ENCODE measurements at regions of chr7 and their contacts with region 1.

Region 1: DNA sequence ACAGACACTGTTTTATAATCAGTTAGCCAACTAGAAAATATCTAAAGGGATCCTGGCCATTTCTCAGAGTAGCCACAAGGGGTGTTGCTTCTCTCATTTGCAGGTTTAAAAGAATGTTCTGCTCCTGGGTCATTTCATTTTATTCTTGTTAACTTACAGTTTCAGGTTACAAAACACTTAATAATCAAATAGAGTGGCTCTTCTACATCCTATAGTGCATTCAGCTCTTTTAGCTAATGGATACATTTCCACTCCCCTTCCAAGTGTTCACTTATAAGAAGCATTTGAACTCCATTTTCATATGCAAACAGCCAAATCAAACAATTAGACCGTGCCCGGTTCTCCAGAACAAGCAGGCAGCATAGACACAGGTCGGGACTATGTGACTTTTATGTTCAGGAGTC is 117.5 kb downstream of the TRIL start:
- DNase-seq: no peak
- H3K4me3 ChIP-seq: no peak overlapping the region
- H3K27ac ChIP-seq: no peak overlapping the region
- H3K4me1 ChIP-seq: no peaks in the 10 kb centered on the region
- H3K27me3 ChIP-seq: no peaks in the 10 kb centered on the region
- CTCF ChIP-seq: peak in 2 of 3 experiments; percentile 16 to 49; a peak in 2 of 4 replicates
- EP300 ChIP-seq: no peak
- POLR2A ChIP-seq: no peak
- RAD21 ChIP-seq: peak; percentile 26 to 40; a peak in 3 of 4 replicates

Region 2: GRCh38 chr7:28823582-28823981 is 17.0 kb before region 1 on chr7:
- CTCF ChIA-PET with region 1: interaction called, 15 read pairs
- POLR2A ChIA-PET with region 1: no interaction called
- DNase-seq: no peak
- H3K4me3 ChIP-seq: no peak overlapping the region
- H3K27ac ChIP-seq: no peak overlapping the region
- H3K4me1 ChIP-seq: peaks cover 0 to 5% (median 1%) of the 10 kb centered on the region in 4 experiments; a peak in 3 of 7 replicates
- H3K27me3 ChIP-seq: no peaks in the 10 kb centered on the region
- CTCF ChIP-seq: no peak
- EP300 ChIP-seq: no peak
- POLR2A ChIP-seq: no peak
- RAD21 ChIP-seq: no peak

Measured in H1 (cell line).